ENCODE measurements at regions of chr1 and their contacts with region 1.

Region 1: DNA sequence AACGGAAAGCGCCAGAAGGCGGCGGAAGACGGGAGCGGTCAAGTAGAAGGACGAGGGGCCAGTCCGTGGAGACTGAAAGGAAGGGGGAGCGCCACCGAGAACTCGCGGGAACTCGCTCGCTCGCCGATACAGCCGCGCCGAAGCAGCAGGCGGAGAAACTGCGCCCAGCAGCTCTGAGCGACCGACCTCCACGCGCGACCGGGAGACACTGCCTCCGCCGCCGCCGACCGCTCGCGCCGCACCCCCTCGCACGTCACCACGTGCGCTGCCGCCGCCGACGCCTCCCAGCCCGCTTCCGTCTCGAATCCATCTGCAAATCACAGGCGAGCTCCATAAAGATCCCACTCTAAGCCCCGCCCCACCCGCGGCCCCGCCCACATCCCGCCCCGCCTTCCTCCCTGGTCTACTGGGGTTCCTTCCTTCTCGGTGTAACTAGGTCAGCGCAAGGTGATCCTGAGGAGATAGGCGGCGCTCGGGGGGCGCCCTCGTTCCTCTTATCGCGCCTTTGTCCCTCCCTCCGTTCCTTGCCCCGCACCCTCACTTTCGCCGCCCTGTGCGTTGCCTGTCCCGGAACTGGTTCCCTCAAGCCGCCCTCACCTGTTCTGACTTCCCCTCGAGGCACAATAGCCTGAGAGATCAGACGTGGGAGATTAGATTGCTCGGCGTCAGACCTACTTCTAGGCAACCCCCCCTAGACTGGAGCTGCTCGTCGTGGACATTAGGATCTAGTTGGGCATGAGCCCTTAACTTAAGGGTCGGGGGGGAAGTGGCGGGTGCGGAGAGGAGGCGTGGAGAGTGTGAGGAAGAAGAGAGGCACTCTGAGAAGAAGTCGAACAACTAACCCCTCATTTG is at the start of gene IVNS1ABP:
- DNase-seq: peak; percentile 96
- H3K4me3 Mint-ChIP-seq: peak within 1 kb of the TSS; percentile 95
- H3K27ac Mint-ChIP-seq: peak within 1 kb of the TSS; percentile 96
- H3K4me1 Mint-ChIP-seq: peaks cover 50% of the 10 kb centered on the region
- H3K27me3 Mint-ChIP-seq: no peaks in the 10 kb centered on the region
- total RNA-seq, gene IVNS1ABP: 136 to 144 TPM

Region 2: GRCh38 chr1:185238447-185238846 is 78.8 kb before region 1 on chr1:
- CTCF ChIA-PET with region 1: interaction called, 5 read pairs
- POLR2A ChIA-PET with region 1: interaction called, 29 read pairs
- DNase-seq: no peak
- H3K4me3 Mint-ChIP-seq: no peak overlapping the region
- H3K27ac Mint-ChIP-seq: no peak overlapping the region
- H3K4me1 Mint-ChIP-seq: peaks cover 15% of the 10 kb centered on the region
- H3K27me3 Mint-ChIP-seq: no peaks in the 10 kb centered on the region

Region 3: GRCh38 chr1:185305419-185305818 is 11.8 kb before region 1 on chr1:
- CTCF ChIA-PET with region 1: no interaction called
- POLR2A ChIA-PET with region 1: interaction called, 20 read pairs
- DNase-seq: no peak
- H3K4me3 Mint-ChIP-seq: no peak overlapping the region
- H3K27ac Mint-ChIP-seq: no peak overlapping the region
- H3K4me1 Mint-ChIP-seq: peaks cover 9% of the 10 kb centered on the region
- H3K27me3 Mint-ChIP-seq: no peaks in the 10 kb centered on the region

Region 4: GRCh38 chr1:185439727-185440415 is 122.6 kb after region 1 on chr1:
- CTCF ChIA-PET with region 1: interaction called, 4 read pairs
- POLR2A ChIA-PET with region 1: interaction called, 43 read pairs
- DNase-seq: peak; percentile 56
- H3K4me3 Mint-ChIP-seq: no peak overlapping the region
- H3K27ac Mint-ChIP-seq: no peak overlapping the region
- H3K4me1 Mint-ChIP-seq: peaks cover 13% of the 10 kb centered on the region
- H3K27me3 Mint-ChIP-seq: no peaks in the 10 kb centered on the region

Region 5: GRCh38 chr1:185595835-185596667 is 278.8 kb after region 1 on chr1:
- CTCF ChIA-PET with region 1: interaction called, 20 read pairs
- POLR2A ChIA-PET with region 1: interaction called, 10 read pairs
- DNase-seq: peak; percentile 55
- H3K4me3 Mint-ChIP-seq: no peak overlapping the region
- H3K27ac Mint-ChIP-seq: no peak overlapping the region
- H3K4me1 Mint-ChIP-seq: peaks cover 16% of the 10 kb centered on the region
- H3K27me3 Mint-ChIP-seq: no peaks in the 10 kb centered on the region

Region 6: DNA sequence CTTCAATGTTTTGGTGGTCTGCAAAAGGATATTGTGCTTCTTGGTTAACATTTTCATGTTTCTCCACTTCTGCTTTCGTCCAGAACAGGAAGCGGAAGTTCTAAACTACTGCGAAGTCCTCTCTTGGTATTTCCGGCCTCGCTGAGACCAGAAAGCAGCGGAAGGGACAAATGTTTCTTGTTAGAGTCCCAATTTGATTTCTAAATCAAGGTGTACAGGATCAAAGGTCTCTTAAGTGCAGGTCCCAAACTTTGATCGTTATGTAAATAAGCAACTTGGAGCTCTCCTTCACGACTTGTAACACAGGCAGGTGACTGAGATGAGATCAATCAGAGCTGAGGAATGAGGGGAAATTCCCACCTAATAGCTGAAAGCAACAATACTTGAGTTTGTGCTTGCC is 376.8 kb after region 1 on chr1:
- CTCF ChIA-PET with region 1: interaction called, 3 read pairs
- POLR2A ChIA-PET with region 1: interaction called, 18 read pairs
- DNase-seq: peak; percentile 36
- H3K4me3 Mint-ChIP-seq: peak overlapping the region; percentile 39
- H3K27ac Mint-ChIP-seq: peak overlapping the region; percentile 41
- H3K4me1 Mint-ChIP-seq: peaks cover 13% of the 10 kb centered on the region
- H3K27me3 Mint-ChIP-seq: peaks cover 2% of the 10 kb centered on the region